Activated CD4-positive, alpha-beta T cell treated with anti-CD3 and anti-CD28 coated beads, Interleukin-2, amount 10 ng/mL, durations not matched to agents 24 days and 14 days (primary cell): ENCODE measurements at regions of chr1 and their contacts with region 1.

Region 1: DNA sequence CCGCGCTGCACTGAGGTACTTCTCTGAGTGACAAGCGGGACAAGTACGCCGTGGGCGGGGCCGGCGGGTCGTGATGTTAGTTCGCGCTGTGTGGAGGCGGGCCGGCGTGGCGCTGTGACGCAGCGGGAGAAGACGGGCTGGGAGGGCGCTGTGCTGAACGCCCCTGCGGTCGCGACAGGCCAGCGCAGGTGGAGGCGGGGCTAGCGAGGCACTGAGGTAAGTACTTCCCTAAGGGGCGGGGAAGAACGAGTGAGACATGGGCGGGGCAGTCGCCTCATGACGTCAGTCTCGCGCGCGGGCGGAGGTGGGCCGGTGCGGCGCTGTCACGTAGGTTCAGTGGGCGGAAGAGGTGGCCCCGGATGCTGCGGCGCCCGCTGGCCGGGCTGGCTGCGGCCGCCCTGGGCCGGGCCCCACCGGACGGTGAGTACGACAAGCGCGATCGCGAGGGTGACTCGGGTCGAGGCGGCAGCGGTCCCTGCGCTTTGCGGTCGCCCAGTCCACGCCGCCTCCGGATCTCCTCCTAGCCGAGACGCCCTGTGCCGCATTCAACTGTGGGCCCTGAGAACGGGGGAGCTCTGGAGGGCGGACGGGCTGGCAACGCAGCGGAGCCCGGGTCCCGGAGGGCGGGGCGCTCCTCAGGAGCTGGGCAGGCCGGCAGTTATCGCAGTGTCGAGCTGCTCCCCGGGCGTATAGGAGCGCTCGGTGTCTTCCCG is at the start of gene GUK1:
- DNase-seq: peak; percentile 100
- H3K4me3 Mint-ChIP-seq: peak within 1 kb of the TSS; percentile 98
- H3K27ac Mint-ChIP-seq: peak within 1 kb of the TSS; percentile 97
- H3K4me1 Mint-ChIP-seq: peaks cover 26% of the 10 kb centered on the region
- H3K27me3 Mint-ChIP-seq: peaks cover 29% of the 10 kb centered on the region
- total RNA-seq, gene GUK1: 211 and 222 TPM in 2 replicates

Region 2: DNA sequence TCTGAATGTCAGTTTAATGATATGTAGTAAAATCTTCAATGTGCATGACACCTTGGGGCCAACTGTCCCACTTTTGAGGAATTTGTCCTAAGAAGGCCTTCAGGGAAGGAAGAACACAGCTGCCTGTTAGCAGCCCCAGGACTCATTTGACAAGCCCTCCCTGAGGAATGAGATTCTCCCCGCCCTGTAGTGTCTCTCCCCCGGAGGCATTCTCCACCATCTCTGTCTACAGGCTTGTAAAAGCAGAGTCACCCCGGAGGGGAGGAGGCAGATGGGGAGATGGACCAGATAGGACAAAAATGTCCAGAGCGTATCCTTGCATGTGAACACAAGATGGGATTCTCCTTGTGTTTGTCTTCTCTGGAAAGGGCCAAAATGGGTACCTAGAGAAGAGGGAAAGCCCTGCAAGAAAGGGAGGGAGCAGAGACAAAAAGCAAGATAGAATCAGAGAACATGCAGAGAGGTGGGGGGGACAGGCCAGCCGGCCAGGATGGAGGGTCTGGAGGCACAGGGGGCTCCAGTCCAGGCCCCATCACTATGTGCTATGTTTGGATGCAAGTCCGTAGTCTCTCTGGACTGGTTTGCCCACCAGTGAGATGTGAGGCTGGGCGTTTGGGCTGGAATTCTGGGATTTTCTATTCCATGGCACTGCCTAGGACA is 145.3 kb before region 1 on chr1:
- intact Hi-C with region 1: no loop called
- DNase-seq: no peak
- H3K4me3 Mint-ChIP-seq: no peak overlapping the region
- H3K27ac Mint-ChIP-seq: no peak overlapping the region
- H3K4me1 Mint-ChIP-seq: no peaks in the 10 kb centered on the region
- H3K27me3 Mint-ChIP-seq: peaks cover 15% of the 10 kb centered on the region

Region 3: DNA sequence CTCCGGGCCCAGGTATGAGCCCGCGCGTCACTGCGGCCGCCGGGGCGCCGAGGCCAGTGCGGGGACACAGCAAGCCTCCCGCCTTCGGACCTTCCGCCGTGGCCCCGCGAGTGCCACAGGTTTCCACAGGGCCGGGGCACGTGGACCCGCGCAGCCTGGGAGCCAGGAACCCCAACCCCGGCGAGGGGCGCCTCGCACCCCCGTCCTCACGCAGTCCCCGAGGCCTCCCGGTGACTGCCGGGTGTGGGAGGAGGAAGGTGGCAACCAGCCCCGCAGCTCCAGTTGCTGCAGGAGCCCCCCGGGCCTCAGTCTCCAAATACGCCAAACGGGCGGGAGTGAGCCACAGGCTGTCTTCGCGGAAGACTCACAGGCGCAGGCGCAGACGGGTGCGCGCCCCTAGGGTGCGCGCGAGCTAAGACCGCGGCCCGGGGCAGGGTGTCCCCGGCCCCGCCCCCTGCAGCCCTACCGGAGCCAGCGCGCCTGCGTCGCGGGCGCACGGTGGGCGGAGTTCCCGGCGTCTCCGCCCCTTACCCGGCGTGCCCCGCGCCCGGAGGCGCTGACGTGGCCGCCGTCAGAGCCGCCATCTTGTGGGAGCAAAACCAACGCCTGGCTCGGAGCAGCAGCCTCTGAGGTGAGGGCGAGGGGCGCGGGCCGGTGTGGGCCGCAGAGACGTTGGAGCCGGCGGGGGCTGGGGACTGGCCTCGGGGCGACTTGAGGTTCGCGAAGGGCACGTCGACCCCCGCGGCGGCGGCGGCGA is 57.8 kb before region 1 on chr1 and contains the start of gene ARF1:
- intact Hi-C with region 1: loop called (anchors 1 kb)
- DNase-seq: peak; percentile 98
- H3K4me3 Mint-ChIP-seq: peak within 1 kb of the TSS; percentile 97
- H3K27ac Mint-ChIP-seq: peak within 1 kb of the TSS; percentile 93
- H3K4me1 Mint-ChIP-seq: peaks cover 39% of the 10 kb centered on the region
- H3K27me3 Mint-ChIP-seq: no peaks in the 10 kb centered on the region
- total RNA-seq, gene ARF1: 388 and 395 TPM in 2 replicates

Region 4: GRCh38 chr1:228109073-228109961 is 30.8 kb before region 1 on chr1 and contains the start of gene MRPL55:
- intact Hi-C with region 1: loop called (anchors 1 kb)
- DNase-seq: peak; percentile 100
- H3K4me3 Mint-ChIP-seq: peak within 1 kb of the TSS; percentile 95
- H3K27ac Mint-ChIP-seq: peak within 1 kb of the TSS; percentile 88
- H3K4me1 Mint-ChIP-seq: peaks cover 23% of the 10 kb centered on the region
- H3K27me3 Mint-ChIP-seq: peaks cover 2% of the 10 kb centered on the region
- total RNA-seq, gene MRPL55: 55.2 and 62.2 TPM in 2 replicates

Region 5: DNA sequence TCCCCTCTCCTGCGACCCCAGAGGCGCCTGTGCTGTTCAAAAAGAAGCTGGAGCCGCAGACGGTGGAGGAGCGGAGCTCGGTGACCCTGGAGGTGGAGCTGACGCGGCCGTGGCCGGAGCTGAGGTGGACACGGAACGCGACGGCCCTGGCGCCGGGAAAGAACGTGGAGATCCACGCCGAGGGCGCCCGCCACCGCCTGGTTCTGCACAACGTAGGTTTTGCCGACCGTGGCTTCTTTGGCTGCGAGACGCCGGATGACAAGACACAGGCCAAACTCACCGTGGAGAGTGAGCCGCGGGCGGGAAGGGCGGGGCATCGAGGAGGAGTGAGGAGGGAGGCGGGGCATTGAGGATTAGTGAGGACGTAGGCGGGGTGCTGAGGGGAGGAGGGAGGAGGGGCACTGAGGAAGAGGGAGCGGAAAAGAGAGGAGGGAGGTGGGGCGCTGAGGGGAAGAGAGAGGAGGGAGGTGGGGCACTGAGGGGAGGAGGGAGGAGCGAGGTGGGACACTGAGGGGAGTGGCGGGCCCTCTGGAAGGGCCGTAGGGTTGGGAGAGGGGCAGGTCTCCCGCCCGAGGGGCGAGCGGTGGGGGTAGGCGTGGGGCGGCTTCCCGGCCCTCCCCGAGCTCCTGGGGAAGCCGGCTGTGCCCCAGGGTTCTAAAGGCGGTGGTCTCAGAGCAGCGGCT is 135.8 kb after region 1 on chr1:
- intact Hi-C with region 1: loop called (anchors 2 kb)
- DNase-seq: peak; percentile 96
- H3K4me3 Mint-ChIP-seq: peak overlapping the region; percentile 80
- H3K27ac Mint-ChIP-seq: peak overlapping the region; percentile 34
- H3K4me1 Mint-ChIP-seq: peaks cover 6% of the 10 kb centered on the region
- H3K27me3 Mint-ChIP-seq: no peaks in the 10 kb centered on the region

Region 6: DNA sequence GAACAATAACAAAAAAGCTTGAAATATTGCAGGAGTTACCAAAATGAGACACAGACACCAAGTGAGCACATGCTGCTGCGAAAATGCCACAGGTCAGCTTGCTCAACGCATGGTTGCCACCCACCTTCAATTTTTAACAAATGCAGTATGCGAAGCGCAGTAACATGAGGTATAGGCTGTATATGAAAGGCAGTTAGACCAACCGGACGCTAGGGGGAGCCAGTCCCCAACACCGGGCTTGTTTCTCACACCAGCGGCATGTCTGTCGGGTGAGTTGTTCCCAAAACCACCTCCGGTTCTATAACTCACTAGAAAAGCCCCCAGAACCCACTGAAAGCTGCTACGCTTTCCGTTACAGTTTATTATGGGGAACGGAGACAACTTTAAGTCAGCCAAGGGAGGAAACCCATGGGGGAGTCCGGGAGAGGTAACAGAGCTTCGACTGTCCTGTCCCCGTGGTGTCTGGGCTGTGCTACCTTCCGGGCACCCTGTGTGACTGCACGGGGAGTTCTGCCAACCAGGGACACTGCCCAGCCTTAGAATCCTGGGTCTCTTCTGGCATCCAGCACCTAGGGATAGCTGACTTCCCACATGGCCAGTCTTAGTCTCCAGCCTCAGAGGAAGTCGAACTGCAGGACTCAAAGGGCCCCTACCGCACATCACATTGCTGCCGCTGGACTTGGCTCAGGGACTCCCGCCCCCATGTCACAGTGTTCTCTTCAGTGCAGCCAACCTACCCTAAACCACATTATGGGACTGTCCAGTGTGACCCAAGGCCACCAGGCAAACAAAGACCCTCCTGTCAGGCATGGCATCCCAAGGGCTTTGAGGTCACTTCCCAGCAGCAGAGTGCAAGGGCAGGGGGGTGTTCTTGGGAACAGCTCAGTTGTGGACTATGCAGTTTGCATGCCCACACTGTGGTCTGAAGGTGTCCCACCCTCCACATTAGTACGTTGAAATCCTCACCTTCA is 361.1 kb after region 1 on chr1:
- intact Hi-C with region 1: loop called (anchors 2 kb)
- DNase-seq: peak; percentile 95
- H3K4me3 Mint-ChIP-seq: peak overlapping the region; percentile 77
- H3K27ac Mint-ChIP-seq: peak overlapping the region; percentile 42
- H3K4me1 Mint-ChIP-seq: peaks cover 20% of the 10 kb centered on the region
- H3K27me3 Mint-ChIP-seq: no peaks in the 10 kb centered on the region